Activated B cell treated with CpG ODN at 0.5 μM for 24 hours (primary cell): ENCODE measurements at regions of chr14 and their contacts with region 1.

Region 1: DNA sequence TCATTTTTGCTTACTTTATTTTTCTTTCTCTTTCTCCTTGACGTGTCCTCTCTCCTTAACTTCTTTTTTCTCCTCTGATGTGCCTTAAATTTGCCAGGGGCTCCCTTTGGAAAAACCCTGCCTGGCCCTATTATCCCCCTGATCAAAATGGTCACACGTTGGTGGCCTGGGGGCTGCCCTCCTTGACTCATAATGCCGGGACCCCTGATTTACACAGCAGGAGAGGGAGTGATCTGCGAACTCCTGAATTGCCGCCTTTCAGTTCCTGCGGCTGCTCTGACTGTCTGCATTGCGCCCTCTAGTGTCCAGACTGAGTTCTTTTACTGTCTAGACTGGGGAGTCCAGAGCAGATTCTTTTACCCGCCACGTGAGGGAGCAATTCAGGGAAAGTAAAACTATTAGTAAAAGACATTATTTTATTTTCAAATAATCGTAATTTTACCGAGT is 44.8 kb upstream of the GZMB start:
- DNase-seq: peak; percentile 43
- ATAC-seq: peak; percentile 91
- H3K4me3 Mint-ChIP-seq: peak overlapping the region; percentile 75
- H3K27ac Mint-ChIP-seq: peak overlapping the region; percentile 78
- H3K4me1 Mint-ChIP-seq: peaks cover 51% of the 10 kb centered on the region
- H3K27me3 Mint-ChIP-seq: no peaks in the 10 kb centered on the region
- CTCF ChIP-seq: peak; percentile 99

Region 2: GRCh38 chr14:24366721-24367513 is 311.9 kb before region 1 on chr14:
- CTCF ChIA-PET with region 1: no interaction called
- POLR2A ChIA-PET with region 1: no interaction called
- intact Hi-C with region 1: loop called (anchors 1 kb)
- DNase-seq: peak; percentile 100
- ATAC-seq: peak; percentile 83
- H3K4me3 Mint-ChIP-seq: peak overlapping the region; percentile 85
- H3K27ac Mint-ChIP-seq: peak overlapping the region; percentile 80
- H3K4me1 Mint-ChIP-seq: peaks cover 33% of the 10 kb centered on the region
- H3K27me3 Mint-ChIP-seq: peaks cover 5% of the 10 kb centered on the region
- CTCF ChIP-seq: no peak

Region 3: GRCh38 chr14:24481622-24482324 is 197.1 kb before region 1 on chr14:
- CTCF ChIA-PET with region 1: interaction called, 6 read pairs
- POLR2A ChIA-PET with region 1: no interaction called
- intact Hi-C with region 1: loop called (anchors 1 kb)
- DNase-seq: peak; percentile 27
- ATAC-seq: peak; percentile 77
- H3K4me3 Mint-ChIP-seq: peak overlapping the region; percentile 83
- H3K27ac Mint-ChIP-seq: peak overlapping the region; percentile 41
- H3K4me1 Mint-ChIP-seq: peaks cover 20% of the 10 kb centered on the region
- H3K27me3 Mint-ChIP-seq: no peaks in the 10 kb centered on the region
- CTCF ChIP-seq: no peak

Region 4: DNA sequence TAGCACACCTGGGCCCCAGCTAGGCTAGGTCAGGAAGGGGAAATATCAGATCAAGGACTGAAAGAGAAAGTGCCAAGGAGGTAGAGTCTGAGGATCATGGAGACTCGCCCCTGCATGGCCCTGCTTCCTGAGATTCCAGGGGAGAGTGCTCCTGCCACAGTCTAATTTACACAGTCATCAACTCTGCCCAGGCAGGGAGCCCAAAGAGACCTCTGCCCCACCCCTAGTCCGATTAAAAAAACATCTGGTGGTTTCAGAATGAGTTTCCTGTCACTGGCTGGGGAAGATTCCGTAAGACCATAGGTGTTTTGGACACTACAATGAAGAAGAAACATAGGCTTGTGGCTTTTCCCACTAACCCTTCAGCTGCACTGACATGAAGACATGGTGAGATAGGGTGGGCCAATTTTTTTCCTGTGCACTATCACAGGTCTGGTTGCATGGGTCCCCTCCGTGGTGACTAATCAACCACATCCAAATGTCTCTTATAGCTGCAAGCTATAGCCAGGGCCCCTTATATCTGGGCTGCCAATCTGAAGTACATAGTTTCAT is 13.3 kb before region 1 on chr14:
- CTCF ChIA-PET with region 1: interaction called, 7 read pairs
- POLR2A ChIA-PET with region 1: interaction called, 5 read pairs
- intact Hi-C with region 1: loop called (anchors 2 kb)
- DNase-seq: no peak
- ATAC-seq: peak; percentile 92
- H3K4me3 Mint-ChIP-seq: peak overlapping the region; percentile 58
- H3K27ac Mint-ChIP-seq: peak overlapping the region; percentile 76
- H3K4me1 Mint-ChIP-seq: peaks cover 48% of the 10 kb centered on the region
- H3K27me3 Mint-ChIP-seq: no peaks in the 10 kb centered on the region
- CTCF ChIP-seq: no peak

Region 5: GRCh38 chr14:24710403-24711112 is 31.7 kb after region 1 on chr14:
- CTCF ChIA-PET with region 1: interaction called, 30 read pairs
- POLR2A ChIA-PET with region 1: interaction called, 13 read pairs
- intact Hi-C with region 1: loop called (anchors 5 kb)
- DNase-seq: no peak
- ATAC-seq: no peak
- H3K4me3 Mint-ChIP-seq: no peak overlapping the region
- H3K27ac Mint-ChIP-seq: no peak overlapping the region
- H3K4me1 Mint-ChIP-seq: peaks cover 31% of the 10 kb centered on the region
- H3K27me3 Mint-ChIP-seq: peaks cover 3% of the 10 kb centered on the region
- CTCF ChIP-seq: peak; percentile 33